Activated CD4-positive, alpha-beta T cell treated with anti-CD3 and anti-CD28 coated beads for 36 hours (primary cell): ENCODE measurements at regions of chr12 and their contacts with region 1.

Region 1: GRCh38 chr12:109052414-109053323 is at the start of gene USP30:
- DNase-seq: peak; percentile 91
- ATAC-seq: peak; percentile 70
- H3K4me3 Mint-ChIP-seq: peak within 1 kb of the TSS; percentile 86
- H3K27ac Mint-ChIP-seq: peak within 1 kb of the TSS; percentile 97
- H3K4me1 Mint-ChIP-seq: peaks cover 6% of the 10 kb centered on the region
- H3K27me3 Mint-ChIP-seq: no peaks in the 10 kb centered on the region
- total RNA-seq, gene USP30: 9.2 to 14.5 TPM

Region 2: DNA sequence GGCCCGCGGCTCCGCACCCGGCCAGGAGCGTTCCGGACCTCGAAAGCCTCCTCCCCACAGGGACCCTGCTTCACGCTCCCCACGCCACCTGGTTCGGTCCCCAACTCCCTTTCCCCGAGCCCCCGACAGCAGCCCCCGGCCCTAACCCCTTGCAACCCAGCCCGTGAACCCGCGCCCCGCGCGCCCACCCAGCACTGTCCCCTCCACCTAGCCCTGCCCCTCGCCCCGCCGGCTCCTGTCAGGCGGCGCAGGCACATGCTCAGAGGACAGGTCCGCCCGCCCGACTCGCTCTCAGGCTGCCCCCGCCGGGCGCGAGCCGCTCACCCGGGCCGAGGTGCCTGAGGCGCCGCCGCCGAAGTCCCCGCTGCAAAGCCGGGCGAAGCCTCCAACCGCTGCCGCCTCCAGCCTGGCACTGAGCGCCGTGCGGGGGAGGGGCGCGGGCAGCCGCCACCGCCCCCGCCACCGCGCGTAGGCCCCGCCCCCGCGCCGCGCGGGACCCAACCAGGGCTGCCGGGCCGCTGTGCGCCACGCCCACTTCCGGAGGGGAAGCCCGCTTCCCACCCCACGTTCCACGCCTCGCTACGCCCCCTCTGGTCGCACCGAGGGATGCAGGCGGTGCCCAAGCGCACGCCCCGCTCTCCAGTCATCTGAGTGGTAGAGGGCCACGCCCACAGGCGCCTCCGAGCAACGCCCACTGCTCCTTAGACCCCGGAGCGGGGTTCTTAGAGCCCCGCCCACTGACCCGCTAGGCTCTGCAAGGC is 321.4 kb before region 1 on chr12 and contains the start of gene CORO1C:
- CTCF ChIA-PET with region 1: no interaction called
- POLR2A ChIA-PET with region 1: no interaction called
- intact Hi-C with region 1: loop called in 1 of 2 experiments (anchors 2 kb)
- DNase-seq: peak; percentile 98
- ATAC-seq: peak; percentile 78
- H3K4me3 Mint-ChIP-seq: peak within 1 kb of the TSS; percentile 88
- H3K27ac Mint-ChIP-seq: peak within 1 kb of the TSS; percentile 93
- H3K4me1 Mint-ChIP-seq: peaks cover 36% of the 10 kb centered on the region
- H3K27me3 Mint-ChIP-seq: no peaks in the 10 kb centered on the region
- total RNA-seq, gene CORO1C: 83.5 to 90.8 TPM